Activated B cell treated with CpG ODN at 0.5 μM for 24 hours (primary cell): ENCODE measurements at regions of chr1 and their contacts with region 1.

Region 1: DNA sequence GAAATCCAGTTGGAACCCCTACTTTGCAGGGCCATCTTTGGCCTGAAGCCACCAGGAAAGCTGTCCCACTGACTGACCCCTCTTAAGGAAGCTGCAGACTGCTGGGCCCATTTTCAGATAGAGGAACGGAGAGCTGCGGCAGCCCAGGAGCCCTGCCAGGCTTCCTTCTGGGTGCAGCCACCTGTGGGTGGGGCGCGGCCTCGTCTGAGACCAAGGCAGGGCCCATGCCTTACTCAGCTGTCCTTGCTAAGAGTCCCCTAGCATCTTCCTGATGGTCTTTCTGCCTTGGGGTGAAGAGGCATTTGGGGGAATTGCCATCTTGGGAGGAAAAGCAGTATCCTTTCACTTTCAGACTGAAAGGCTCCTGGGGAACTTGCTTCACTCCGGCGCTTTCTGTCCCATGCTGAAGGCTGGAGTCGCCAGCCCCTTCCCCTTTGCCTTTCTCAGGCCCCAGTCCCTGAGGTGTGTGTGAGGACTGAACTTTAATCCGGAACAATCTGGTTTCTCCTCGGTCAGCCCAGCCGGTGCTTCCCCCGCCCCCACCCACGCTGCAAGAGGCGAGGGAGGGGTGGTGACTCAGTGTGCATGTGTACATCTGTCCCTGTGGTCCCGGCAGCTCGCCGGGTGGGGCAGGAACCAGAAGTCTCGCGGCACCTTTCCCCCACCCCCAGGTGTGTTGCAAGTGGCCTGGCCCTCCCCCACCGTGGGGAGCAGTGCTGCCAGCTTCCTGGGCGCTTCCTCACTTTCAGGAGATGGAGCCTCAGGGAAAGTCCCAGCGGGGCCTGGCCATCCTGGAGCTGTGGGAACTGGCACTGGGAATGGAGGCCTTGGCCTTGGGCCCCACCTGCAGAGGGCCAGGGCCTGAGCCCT is 5.1 kb downstream of the ZC3H12A start:
- DNase-seq: peak; percentile 64
- ATAC-seq: peak; percentile 54
- H3K4me3 Mint-ChIP-seq: peak overlapping the region; percentile 99
- H3K27ac Mint-ChIP-seq: peak overlapping the region; percentile 92
- H3K4me1 Mint-ChIP-seq: peaks cover 61% of the 10 kb centered on the region
- H3K27me3 Mint-ChIP-seq: no peaks in the 10 kb centered on the region
- CTCF ChIP-seq: no peak

Region 2: DNA sequence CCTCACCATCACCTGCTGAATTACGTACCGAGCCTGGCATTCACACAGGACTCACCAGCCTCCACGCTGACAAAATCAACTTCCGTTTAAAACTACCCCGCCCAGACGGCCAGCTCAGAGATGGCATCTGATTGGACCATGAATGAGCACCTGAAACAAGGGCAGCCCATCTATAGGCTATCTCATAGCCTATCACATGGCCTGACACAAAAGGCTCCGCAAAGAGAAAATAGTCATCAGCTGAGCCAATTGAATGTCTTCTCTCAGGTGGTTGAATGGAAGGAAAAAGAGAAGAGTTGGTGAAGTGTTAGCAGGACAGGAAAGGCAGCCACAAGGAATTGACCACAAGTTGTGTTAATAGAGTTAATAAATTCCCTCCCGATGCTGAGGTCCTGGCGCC is 55.7 kb before region 1 on chr1:
- CTCF ChIA-PET with region 1: no interaction called
- POLR2A ChIA-PET with region 1: no interaction called
- intact Hi-C with region 1: no loop called
- DNase-seq: no peak
- ATAC-seq: no peak
- H3K4me3 Mint-ChIP-seq: no peak overlapping the region
- H3K27ac Mint-ChIP-seq: no peak overlapping the region
- H3K4me1 Mint-ChIP-seq: no peaks in the 10 kb centered on the region
- H3K27me3 Mint-ChIP-seq: peaks cover 15% of the 10 kb centered on the region
- CTCF ChIP-seq: no peak

Region 3: GRCh38 chr1:37458528-37458927 is 21.0 kb before region 1 on chr1:
- CTCF ChIA-PET with region 1: interaction called, 261 read pairs
- POLR2A ChIA-PET with region 1: interaction called, 29 read pairs
- intact Hi-C with region 1: no loop called
- DNase-seq: no peak
- ATAC-seq: no peak
- H3K4me3 Mint-ChIP-seq: no peak overlapping the region
- H3K27ac Mint-ChIP-seq: no peak overlapping the region
- H3K4me1 Mint-ChIP-seq: peaks cover 5% of the 10 kb centered on the region
- H3K27me3 Mint-ChIP-seq: no peaks in the 10 kb centered on the region
- CTCF ChIP-seq: no peak

Region 4: DNA sequence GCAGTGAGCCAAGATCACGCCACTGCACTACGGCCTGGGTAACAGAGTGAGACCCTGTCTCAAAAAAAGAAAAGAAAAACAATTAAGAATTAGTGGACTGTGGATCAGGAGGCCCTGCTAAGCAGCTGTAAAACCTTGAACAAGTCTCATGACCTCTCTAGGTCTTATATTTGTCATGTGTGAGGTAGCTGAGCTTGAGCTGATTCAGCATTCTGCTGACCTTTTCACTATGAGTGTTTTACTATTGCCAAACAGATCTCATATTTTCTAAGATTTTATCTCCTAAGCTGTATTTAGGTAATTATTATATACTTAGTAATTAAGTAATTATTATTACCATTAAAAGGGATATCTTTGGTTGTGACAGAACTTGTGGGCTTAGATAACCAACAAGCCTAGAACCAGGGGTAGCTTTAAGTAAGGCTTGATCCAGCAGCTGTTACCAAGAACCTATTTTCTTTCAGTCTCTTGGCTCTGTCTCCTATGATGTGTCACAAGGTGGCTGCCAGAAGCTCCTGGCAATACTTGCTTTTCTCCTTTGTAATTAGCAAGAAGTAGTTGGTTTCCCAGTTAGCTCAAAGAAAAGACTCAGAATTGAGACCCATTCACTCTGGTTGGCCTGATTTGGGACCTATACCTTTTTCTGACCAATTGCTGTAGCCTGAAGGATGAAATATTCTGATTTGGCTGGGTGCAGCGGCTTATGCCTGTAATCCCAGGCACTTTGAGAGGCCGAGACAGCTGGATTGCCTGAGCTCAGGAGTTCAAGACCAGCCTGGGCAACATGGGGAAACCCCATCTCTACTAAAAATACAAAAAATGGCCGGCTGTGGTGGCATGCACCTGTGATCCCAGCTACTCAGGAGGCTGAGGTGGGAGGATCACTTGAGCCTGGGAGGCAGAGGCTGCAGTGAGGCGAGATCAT is 13.6 kb before region 1 on chr1:
- CTCF ChIA-PET with region 1: interaction called, 261 read pairs
- POLR2A ChIA-PET with region 1: interaction called, 20 read pairs
- intact Hi-C with region 1: no loop called
- DNase-seq: no peak
- ATAC-seq: no peak
- H3K4me3 Mint-ChIP-seq: no peak overlapping the region
- H3K27ac Mint-ChIP-seq: no peak overlapping the region
- H3K4me1 Mint-ChIP-seq: no peaks in the 10 kb centered on the region
- H3K27me3 Mint-ChIP-seq: peaks cover 2% of the 10 kb centered on the region
- CTCF ChIP-seq: no peak

Region 5: DNA sequence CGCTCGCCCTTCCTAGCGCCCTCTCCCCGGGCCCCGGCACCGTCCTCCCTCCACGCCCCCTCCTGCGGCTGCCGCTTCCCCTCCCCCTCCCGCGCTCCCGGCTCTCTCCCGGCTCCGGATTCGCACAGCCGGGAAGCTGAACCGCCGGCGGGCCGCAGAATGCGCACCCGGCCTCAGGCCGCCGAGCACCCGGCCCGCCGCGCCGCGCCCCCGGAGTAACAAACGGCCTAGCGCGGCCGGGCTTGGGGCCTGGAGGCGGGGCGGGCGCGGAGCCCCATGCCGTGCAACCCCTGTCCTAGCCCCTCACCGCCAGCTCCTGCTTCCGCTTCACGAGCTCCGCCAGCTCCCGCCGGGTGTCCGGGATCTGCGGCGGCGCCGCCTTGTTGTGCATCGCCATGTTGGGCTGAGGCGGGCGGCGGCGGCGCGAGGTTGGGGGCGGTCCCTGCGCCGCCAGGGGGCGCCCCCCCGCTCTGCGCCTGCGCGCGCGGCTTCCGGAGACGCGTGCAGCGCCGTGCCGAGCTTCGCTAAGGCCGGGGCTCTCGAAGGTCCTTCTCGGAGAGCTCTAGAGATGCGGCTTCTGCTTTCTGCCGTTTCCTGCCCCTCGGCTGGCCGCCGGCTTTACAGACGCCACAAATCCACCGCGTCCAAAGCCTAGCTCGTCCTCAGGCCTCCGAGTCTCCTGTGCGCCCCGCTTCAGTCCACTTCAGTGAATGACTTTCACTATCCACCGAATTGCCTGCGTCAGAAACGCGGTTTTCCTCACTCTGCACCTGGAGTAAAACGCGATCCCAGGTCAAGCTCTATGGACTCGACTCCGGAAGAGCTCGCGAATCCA is 35.1 kb after region 1 on chr1 and contains the start of gene MEAF6:
- CTCF ChIA-PET with region 1: interaction called, 6 read pairs
- POLR2A ChIA-PET with region 1: interaction called, 42 read pairs
- intact Hi-C with region 1: loop called (anchors 1 kb)
- DNase-seq: peak; percentile 93
- ATAC-seq: peak; percentile 95
- H3K4me3 Mint-ChIP-seq: peak within 1 kb of the TSS; percentile 96
- H3K27ac Mint-ChIP-seq: peak within 1 kb of the TSS; percentile 98
- H3K4me1 Mint-ChIP-seq: peaks cover 39% of the 10 kb centered on the region
- H3K27me3 Mint-ChIP-seq: no peaks in the 10 kb centered on the region
- CTCF ChIP-seq: no peak
- total RNA-seq, gene MEAF6: 59.9 and 66.5 TPM in 2 replicates

Region 6: DNA sequence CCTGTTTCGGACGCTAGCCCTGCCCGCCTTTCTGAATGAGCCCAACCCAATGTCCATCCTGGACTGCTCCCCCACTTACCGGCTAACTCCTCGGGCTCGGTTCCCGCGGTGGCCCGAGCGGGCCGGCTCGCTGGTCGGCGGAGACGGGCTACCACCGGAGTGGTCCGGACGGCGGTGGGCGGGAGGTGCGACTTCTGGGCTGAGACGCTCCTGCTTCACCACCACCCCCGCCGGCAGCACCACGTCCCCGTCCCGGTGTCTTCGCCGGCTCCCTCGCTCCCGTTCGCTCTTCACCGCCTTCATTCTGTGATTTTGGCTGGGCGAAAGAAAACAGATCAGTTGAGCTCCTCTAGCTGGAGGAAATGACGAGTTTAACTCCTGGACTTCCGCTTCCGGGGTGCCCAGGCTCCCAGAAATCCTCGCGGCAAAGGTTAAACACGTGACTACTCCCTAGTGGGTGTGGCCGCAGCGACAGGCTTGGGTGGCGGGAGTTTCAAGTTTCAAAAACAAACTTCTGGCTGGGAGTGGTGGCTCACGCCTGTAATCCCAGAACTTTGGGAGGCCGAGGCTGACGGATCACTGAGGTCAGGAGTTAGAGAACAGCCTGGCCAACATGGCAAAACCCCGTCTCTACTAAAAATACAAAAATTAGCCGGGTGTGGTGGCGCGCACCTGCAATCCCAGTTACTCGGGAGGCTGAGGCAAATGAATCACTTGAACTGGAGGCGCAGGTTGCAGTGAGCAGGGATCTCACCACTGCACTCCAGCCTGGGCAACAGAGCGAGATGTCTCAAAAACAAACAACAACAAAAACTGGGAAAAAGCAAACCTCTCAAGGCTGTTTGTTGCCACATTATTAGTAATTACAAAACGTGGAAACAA is 74.7 kb after region 1 on chr1 and contains the start of gene SNIP1:
- CTCF ChIA-PET with region 1: no interaction called
- POLR2A ChIA-PET with region 1: interaction called, 7 read pairs
- intact Hi-C with region 1: loop called (anchors 1 kb)
- DNase-seq: peak; percentile 84
- ATAC-seq: peak; percentile 98
- H3K4me3 Mint-ChIP-seq: peak within 1 kb of the TSS; percentile 96
- H3K27ac Mint-ChIP-seq: peak within 1 kb of the TSS; percentile 95
- H3K4me1 Mint-ChIP-seq: peaks cover 34% of the 10 kb centered on the region
- H3K27me3 Mint-ChIP-seq: peaks cover 9% of the 10 kb centered on the region
- CTCF ChIP-seq: no peak
- total RNA-seq, gene SNIP1: 34.7 and 35.7 TPM in 2 replicates